Activated B cell treated with CpG ODN at 0.5 μM for 24 hours (primary cell): ENCODE measurements at regions of chr10 and their contacts with region 1.

Region 1: DNA sequence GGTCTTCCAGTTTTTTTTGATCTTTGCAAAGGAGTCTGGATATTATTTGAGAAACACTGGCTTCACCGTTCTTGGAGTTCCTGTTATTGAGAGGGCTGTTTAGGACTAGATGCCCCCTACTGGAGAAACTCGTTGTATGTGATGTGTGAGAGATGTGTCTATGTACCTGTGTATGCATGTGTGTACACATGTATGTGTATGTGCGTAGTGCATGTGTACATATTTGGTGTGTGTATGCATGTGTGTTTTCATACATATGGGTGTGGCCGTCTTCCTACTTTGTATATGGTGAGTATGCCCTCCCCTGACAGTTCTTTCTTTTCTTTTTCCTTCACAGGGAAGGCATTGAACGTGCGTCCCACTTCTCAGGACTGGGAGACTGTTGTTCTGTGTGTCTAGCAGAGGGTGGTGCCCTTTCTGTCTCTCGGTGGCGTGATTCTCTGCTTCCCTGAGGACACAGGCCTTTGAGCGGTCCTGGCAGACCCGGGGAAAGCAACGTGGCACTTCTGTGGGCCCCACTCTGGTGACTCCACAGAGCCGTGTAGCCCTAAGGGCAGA is 3.0 kb upstream of the CALHM3 start:
- DNase-seq: no peak
- ATAC-seq: peak; percentile 78
- H3K4me3 Mint-ChIP-seq: no peak overlapping the region
- H3K27ac Mint-ChIP-seq: no peak overlapping the region
- H3K4me1 Mint-ChIP-seq: peaks cover 9% of the 10 kb centered on the region
- H3K27me3 Mint-ChIP-seq: no peaks in the 10 kb centered on the region
- CTCF ChIP-seq: peak; percentile 49

Region 2: DNA sequence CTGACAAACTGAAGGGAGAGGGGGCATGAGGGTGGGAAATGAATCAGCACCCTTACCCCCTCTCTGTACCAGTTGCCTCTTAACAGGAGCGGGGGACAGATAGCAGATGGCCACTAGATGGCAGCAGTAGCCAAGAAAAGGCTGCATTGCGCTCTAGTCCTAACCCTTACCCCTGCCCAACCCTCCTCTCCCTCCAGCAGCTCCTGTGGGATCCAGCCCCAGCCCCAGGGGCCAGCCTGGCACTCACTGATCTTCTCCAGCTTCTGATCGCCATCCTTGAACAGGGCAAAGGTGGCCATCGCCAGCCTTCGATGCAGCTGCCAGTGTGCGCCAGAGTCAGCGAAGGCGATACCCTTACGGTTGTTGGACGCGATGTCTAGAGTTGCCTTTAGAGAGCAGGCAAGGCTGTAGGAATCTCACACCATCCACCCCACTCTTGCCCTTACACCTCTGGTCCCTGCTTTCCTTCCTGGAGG is 647.0 kb before region 1 on chr10:
- CTCF ChIA-PET with region 1: interaction called, 4 read pairs
- POLR2A ChIA-PET with region 1: no interaction called
- intact Hi-C with region 1: loop called (anchors 5 kb)
- DNase-seq: peak; percentile 57
- ATAC-seq: peak; percentile 95
- H3K4me3 Mint-ChIP-seq: no peak overlapping the region
- H3K27ac Mint-ChIP-seq: no peak overlapping the region
- H3K4me1 Mint-ChIP-seq: peaks cover 2% of the 10 kb centered on the region
- H3K27me3 Mint-ChIP-seq: peaks cover 3% of the 10 kb centered on the region
- CTCF ChIP-seq: peak; percentile 21

Region 3: DNA sequence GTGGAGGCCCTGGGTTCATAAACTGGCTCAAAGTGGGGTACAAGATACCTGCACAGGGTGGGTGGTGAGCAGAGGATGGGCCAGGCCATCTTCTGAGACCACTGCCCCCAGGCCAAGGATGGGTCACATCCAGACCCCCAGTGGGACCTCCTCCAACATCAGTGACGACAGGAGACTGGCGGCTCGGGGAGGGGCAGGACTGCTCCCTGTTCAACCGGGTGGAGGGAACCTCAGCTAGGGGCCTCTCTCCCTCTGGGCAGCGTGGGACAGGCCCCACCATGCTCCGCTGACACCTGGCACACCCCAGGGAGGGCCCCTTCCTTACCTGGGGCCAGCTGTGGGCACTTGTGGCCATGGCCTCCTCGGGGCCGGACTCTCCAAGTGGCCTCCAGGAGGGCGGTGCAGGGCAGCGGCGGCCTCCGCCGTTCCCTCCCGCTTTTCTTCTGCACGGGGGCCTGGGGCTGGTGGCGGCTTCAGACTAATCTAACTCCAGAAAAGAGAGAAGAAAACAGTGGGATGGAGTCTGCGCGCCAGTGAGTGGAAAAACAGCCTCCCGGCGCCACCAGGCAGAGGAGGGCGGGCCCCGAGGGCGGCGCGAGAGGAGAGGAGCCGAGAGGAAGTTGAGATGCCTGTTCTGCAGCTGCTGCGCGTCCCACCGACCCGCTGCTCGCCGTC is 30.1 kb before region 1 on chr10 and contains the start of gene CALHM2:
- CTCF ChIA-PET with region 1: interaction called, 19 read pairs
- POLR2A ChIA-PET with region 1: interaction called, 5 read pairs
- intact Hi-C with region 1: loop called (anchors 1 kb)
- DNase-seq: peak; percentile 55
- ATAC-seq: peak; percentile 86
- H3K4me3 Mint-ChIP-seq: peak within 1 kb of the TSS; percentile 90
- H3K27ac Mint-ChIP-seq: peak within 1 kb of the TSS; percentile 85
- H3K4me1 Mint-ChIP-seq: peaks cover 46% of the 10 kb centered on the region
- H3K27me3 Mint-ChIP-seq: peaks cover 2% of the 10 kb centered on the region
- CTCF ChIP-seq: no peak
- total RNA-seq, gene CALHM2: 17.5 and 21.4 TPM in 2 replicates

Region 4: DNA sequence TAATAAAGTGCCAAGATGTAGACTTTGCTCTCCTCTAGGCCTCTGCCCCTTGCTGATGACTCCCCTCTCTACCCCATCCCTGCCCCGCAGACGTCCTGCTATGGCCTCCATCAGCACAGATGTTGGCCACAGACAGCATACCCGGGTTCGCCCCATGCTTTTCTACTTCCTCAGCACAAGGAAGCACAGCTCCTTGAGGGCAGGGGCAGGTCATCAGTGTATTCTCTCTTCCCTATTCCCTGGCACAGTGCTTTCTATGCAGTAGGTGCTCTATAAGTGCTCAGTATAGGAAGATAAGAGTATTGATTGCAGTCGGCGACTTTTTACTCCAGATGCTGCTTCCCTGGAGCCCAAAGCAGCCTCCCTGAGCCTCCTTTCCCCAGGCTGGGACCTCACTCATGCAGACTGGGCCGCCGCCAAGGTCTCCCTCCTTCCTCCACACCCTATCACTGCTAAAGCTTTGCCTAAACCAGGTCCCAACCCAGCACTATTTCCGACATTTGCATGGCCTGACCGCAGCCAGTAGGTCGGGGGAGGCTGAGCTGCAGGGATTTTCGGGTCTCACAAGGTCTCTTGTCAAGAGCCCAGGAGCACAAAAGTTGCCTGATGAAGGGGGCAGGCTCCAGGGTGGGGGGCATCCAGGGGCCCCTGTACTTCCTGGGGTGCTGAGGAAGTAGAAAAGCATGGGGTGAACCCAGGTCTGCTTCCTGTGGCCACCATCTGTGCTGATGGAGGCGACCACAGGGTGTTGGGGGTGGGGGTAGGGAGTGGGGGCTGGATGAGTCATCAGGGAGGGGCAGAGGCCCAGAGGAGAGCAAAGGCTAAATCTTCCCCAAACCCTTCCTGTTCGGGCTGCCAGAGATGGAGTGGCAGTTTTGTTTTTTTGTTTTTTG is 11.0 kb before region 1 on chr10:
- CTCF ChIA-PET with region 1: interaction called, 5 read pairs
- POLR2A ChIA-PET with region 1: interaction called, 3 read pairs
- intact Hi-C with region 1: loop called (anchors 1 kb)
- DNase-seq: peak; percentile 70
- ATAC-seq: peak; percentile 76
- H3K4me3 Mint-ChIP-seq: peak overlapping the region; percentile 75
- H3K27ac Mint-ChIP-seq: peak overlapping the region; percentile 96
- H3K4me1 Mint-ChIP-seq: peaks cover 72% of the 10 kb centered on the region
- H3K27me3 Mint-ChIP-seq: no peaks in the 10 kb centered on the region
- CTCF ChIP-seq: no peak

Region 5: GRCh38 chr10:103592186-103593021 is 110.4 kb after region 1 on chr10:
- CTCF ChIA-PET with region 1: no interaction called
- POLR2A ChIA-PET with region 1: no interaction called
- intact Hi-C with region 1: loop called (anchors 2 kb)
- DNase-seq: peak; percentile 29
- ATAC-seq: peak; percentile 88
- H3K4me3 Mint-ChIP-seq: no peak overlapping the region
- H3K27ac Mint-ChIP-seq: no peak overlapping the region
- H3K4me1 Mint-ChIP-seq: no peaks in the 10 kb centered on the region
- H3K27me3 Mint-ChIP-seq: no peaks in the 10 kb centered on the region
- CTCF ChIP-seq: no peak